ENCODE measurements at regions of chr16 and their contacts with region 1.

Region 1: DNA sequence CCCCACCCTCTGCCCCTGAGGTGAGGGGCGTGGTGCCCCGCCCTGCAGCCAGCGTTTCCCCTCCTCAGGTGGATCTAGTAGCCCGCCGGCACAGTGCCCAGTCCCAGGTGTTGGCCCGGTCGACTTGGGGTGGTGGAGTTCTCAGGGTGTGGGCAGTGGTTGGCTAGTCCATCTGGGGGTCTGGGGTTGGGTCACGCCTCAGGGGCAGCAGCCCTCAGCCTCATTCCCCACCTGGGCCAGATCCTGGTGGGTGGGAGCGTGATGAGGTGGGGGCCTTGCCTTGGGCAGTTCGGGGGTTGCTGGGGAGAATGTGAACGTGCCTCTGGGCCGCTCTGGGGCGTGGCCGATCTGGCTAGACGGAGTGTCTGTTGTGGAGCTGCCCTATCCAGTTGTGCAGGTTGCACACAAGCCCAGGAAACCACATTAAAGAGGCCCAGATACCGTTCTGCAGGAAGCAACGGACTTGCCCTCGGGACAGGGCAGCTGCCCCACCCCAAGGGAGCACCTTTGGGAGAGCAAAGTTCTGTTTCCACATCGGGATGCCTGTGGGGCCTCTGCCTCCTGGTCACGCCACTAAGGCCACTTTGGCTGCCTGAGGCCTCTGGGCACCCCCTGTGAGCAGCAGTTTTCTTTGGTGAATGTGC is 32.0 kb downstream of the GSE1 start:
- DNase-seq: peak; percentile 90 to 92
- H3K4me3 ChIP-seq: no peak overlapping the region
- H3K4me3 Mint-ChIP-seq: peak overlapping the region; percentile 39
- H3K27ac Mint-ChIP-seq: peak overlapping the region; percentile 73
- H3K4me1 ChIP-seq: peaks cover 28% of the 10 kb centered on the region
- H3K4me1 Mint-ChIP-seq: peaks cover 24% of the 10 kb centered on the region
- H3K27me3 ChIP-seq: no peaks in the 10 kb centered on the region
- H3K27me3 Mint-ChIP-seq: no peaks in the 10 kb centered on the region
- CTCF ChIP-seq: no peak

Region 2: DNA sequence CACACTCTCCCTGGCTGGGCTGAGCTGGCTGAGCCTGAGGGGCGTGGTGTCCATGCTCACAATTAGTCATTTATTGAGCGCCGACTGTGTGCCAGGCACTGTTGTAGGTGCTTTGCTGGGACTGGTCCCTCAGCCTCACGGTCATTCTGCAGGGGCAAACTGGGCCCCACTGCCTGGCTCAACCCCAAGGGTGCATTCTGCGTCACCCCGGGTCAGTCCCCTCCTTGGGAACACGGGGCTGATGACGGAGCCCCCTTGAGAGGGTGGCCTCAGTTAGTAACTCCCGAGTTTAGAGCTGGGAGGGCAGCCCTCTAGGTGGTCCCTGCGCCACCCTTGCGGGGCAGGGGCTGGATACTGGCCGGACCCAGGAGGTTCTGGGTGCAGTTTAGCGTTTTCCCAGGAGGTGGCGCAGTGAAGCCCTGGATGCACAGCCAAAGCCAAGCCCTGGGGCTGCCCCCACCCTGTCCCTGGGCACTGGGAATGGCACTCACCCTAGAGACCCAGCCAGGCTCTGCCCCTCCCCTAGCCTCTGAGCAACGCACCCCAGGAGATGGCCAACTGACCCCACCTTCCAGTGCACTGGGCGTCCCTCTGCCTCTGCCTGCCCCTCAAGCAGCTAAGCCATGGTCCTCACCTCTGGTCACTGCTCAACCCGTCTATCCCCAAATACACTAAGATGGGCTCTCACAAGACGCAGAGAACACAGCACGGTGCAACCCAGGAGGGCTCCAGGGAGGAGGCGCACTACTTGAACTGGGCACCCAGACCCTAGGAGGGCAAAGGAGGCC is 275.2 kb before region 1 on chr16:
- CTCF ChIA-PET with region 1: no interaction called
- POLR2A ChIA-PET with region 1: no interaction called
- intact Hi-C with region 1: no loop called
- DNase-seq: peak; percentile 66 to 83
- H3K4me3 ChIP-seq: no peak overlapping the region
- H3K4me3 Mint-ChIP-seq: no peak overlapping the region
- H3K27ac Mint-ChIP-seq: no peak overlapping the region
- H3K4me1 ChIP-seq: peaks cover 13% of the 10 kb centered on the region
- H3K4me1 Mint-ChIP-seq: no peaks in the 10 kb centered on the region
- H3K27me3 ChIP-seq: no peaks in the 10 kb centered on the region
- H3K27me3 Mint-ChIP-seq: no peaks in the 10 kb centered on the region
- CTCF ChIP-seq: peak; percentile 91

Region 3: GRCh38 chr16:85601730-85602401 is 43.3 kb before region 1 on chr16:
- CTCF ChIA-PET with region 1: no interaction called
- POLR2A ChIA-PET with region 1: no interaction called
- intact Hi-C with region 1: no loop called
- DNase-seq: no peak
- H3K4me3 ChIP-seq: no peak overlapping the region
- H3K4me3 Mint-ChIP-seq: no peak overlapping the region
- H3K27ac Mint-ChIP-seq: no peak overlapping the region
- H3K4me1 ChIP-seq: peaks cover 9% of the 10 kb centered on the region; the same call in 1 of the 2 replicates
- H3K4me1 Mint-ChIP-seq: peaks cover 12% of the 10 kb centered on the region
- H3K27me3 ChIP-seq: no peaks in the 10 kb centered on the region
- H3K27me3 Mint-ChIP-seq: no peaks in the 10 kb centered on the region
- CTCF ChIP-seq: no peak

Region 4: GRCh38 chr16:85621698-85622428 is 23.3 kb before region 1 on chr16:
- CTCF ChIA-PET with region 1: no interaction called
- POLR2A ChIA-PET with region 1: no interaction called
- intact Hi-C with region 1: loop called (anchors 1 kb)
- DNase-seq: peak; percentile 91 to 92
- H3K4me3 ChIP-seq: no peak overlapping the region
- H3K4me3 Mint-ChIP-seq: peak overlapping the region; percentile 56
- H3K27ac Mint-ChIP-seq: peak overlapping the region; percentile 52
- H3K4me1 ChIP-seq: peaks cover 40% of the 10 kb centered on the region
- H3K4me1 Mint-ChIP-seq: peaks cover 51% of the 10 kb centered on the region
- H3K27me3 ChIP-seq: no peaks in the 10 kb centered on the region
- H3K27me3 Mint-ChIP-seq: no peaks in the 10 kb centered on the region
- CTCF ChIP-seq: no peak

Measured in Caco-2 (cell line).